Activated CD4-positive, alpha-beta memory T cell treated with anti-CD3 and anti-CD28 coated beads, Interleukin-2, amount 10 ng/mL, durations not matched to agents 7 days and 5 days (primary cell): ENCODE measurements at regions of chr4 and their contacts with region 1.

Region 1: GRCh38 chr4:6909073-6909965 is at the start of gene TBC1D14:
- DNase-seq: peak; percentile 88
- H3K4me3 Mint-ChIP-seq: peak within 1 kb of the TSS; percentile 91
- H3K27ac Mint-ChIP-seq: peak within 1 kb of the TSS; percentile 85
- H3K4me1 Mint-ChIP-seq: peaks cover 64% of the 10 kb centered on the region
- H3K27me3 Mint-ChIP-seq: peaks cover 2% of the 10 kb centered on the region
- total RNA-seq, gene TBC1D14: 53.7 to 55.3 TPM

Region 2: DNA sequence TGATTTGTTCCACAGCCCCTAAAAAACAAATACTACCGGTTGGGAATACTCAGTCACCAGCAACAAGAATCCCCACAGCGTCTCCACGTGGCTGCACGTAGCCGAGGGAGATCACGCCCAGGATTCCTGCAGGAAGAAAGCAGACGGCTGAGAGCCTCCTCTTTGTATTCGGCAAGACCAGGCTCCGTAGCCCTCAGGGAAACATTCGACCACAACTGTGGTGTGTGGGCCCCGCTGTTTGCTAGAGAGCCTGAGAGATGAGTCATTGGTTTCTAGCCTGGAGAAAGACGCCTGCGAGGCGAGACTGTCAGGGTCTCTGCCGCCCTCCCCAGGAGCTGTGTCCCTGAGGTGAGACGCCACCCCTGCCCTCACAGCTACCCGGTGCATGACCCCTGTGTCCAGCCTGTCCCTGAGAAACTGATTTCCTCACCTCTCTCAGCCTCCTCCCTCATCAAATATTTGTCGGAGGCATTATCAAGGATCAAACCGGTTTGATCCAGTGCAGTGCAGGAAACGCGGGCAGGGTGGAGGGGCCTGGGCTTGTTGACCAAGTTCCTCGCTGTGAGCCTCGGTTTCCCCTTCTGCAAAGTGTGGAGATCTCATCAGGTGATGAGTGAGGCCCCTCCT is 220.3 kb before region 1 on chr4:
- CTCF ChIA-PET with region 1: no interaction called
- POLR2A ChIA-PET with region 1: interaction called, 11 read pairs
- DNase-seq: peak; percentile 91
- H3K4me3 Mint-ChIP-seq: peak overlapping the region; percentile 81
- H3K27ac Mint-ChIP-seq: peak overlapping the region; percentile 97
- H3K4me1 Mint-ChIP-seq: peaks cover 87% of the 10 kb centered on the region
- H3K27me3 Mint-ChIP-seq: no peaks in the 10 kb centered on the region

Region 3: DNA sequence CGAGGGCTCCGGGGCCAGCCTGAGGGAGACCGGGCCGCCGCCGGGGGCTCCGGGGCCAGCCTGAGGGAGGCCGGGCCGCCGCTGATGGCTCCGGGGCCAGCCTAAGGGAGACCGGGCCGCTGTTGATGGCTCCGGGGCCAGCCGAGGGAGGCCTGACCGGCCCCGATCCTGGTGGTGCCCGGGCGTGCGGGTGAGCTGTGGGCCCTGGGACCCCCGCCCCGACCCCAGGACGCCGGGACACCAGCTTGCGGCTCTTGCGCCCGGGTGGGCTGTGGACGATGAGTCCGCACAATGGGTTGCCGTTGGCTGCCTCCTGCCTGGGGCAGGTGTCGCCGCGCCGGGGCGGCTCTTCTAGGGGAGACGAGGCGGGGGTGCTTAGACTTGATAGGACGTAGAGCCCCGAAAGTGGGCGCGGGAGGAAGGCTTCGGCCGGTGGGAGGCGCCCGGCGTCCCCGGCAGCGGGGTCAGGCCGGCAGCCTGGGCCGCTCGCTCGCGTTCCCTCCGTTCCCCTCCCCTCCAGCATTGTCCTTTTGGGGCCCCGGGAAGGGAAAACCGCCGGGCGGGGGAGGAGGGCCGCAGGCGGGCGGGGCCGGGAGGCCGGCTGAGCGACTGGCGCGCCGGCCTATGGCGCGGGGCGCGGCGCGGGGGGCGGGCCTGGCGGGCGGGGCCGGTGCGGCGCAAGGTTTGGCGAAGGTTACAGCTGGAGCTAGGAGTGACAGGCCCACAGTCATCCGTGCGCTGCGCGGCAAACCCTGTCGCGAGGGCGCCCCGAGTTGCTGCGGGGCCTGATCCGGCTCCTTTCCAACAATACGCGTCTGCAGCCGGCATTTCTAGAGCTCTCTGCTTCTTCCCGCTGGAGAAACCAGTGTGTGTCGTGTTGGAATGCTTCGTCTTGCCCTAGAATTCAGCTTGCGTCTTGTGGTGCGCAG is 126.0 kb before region 1 on chr4:
- CTCF ChIA-PET with region 1: no interaction called
- POLR2A ChIA-PET with region 1: interaction called, 15 read pairs
- DNase-seq: peak; percentile 92
- H3K4me3 Mint-ChIP-seq: peak overlapping the region; percentile 79
- H3K27ac Mint-ChIP-seq: peak overlapping the region; percentile 79
- H3K4me1 Mint-ChIP-seq: peaks cover 60% of the 10 kb centered on the region
- H3K27me3 Mint-ChIP-seq: peaks cover 2% of the 10 kb centered on the region

Region 4: GRCh38 chr4:6898763-6899162 is 10.6 kb before region 1 on chr4:
- CTCF ChIA-PET with region 1: interaction called, 26 read pairs
- POLR2A ChIA-PET with region 1: interaction called, 109 read pairs
- DNase-seq: peak; percentile 39
- H3K4me3 Mint-ChIP-seq: peak overlapping the region; percentile 40
- H3K27ac Mint-ChIP-seq: peak overlapping the region; percentile 94
- H3K4me1 Mint-ChIP-seq: peaks cover 63% of the 10 kb centered on the region
- H3K27me3 Mint-ChIP-seq: no peaks in the 10 kb centered on the region

Region 5: DNA sequence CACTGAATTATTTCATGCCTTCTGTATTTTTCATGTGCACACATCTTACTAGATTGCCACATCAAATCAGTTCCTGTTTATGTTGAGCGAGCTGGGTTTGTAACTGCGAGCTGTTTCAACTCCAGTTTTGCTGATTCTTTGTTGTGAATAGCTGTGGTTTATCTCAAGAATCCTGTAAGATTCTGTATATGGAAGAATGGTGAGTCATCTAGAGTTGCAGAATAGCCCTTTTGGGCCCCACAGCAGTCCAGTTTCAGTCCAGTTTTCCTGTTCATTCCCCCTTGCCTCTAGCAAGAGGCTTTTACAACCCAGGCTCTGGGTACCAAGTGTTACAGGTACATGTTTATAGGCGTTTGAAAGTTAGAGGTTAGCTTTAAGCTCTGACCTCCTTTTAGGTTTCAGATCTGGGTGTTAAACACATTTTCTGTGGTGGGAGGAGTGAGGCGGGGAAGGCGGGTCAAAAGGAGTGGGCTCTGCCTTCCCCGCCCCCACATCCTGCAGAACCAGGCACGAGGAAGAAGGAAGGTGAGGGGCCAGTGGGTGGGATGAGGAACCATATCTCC is 33.0 kb after region 1 on chr4:
- CTCF ChIA-PET with region 1: interaction called, 3 read pairs
- POLR2A ChIA-PET with region 1: interaction called, 16 read pairs
- DNase-seq: peak; percentile 61
- H3K4me3 Mint-ChIP-seq: peak overlapping the region; percentile 19
- H3K27ac Mint-ChIP-seq: peak overlapping the region; percentile 87
- H3K4me1 Mint-ChIP-seq: peaks cover 56% of the 10 kb centered on the region
- H3K27me3 Mint-ChIP-seq: no peaks in the 10 kb centered on the region

Region 6: DNA sequence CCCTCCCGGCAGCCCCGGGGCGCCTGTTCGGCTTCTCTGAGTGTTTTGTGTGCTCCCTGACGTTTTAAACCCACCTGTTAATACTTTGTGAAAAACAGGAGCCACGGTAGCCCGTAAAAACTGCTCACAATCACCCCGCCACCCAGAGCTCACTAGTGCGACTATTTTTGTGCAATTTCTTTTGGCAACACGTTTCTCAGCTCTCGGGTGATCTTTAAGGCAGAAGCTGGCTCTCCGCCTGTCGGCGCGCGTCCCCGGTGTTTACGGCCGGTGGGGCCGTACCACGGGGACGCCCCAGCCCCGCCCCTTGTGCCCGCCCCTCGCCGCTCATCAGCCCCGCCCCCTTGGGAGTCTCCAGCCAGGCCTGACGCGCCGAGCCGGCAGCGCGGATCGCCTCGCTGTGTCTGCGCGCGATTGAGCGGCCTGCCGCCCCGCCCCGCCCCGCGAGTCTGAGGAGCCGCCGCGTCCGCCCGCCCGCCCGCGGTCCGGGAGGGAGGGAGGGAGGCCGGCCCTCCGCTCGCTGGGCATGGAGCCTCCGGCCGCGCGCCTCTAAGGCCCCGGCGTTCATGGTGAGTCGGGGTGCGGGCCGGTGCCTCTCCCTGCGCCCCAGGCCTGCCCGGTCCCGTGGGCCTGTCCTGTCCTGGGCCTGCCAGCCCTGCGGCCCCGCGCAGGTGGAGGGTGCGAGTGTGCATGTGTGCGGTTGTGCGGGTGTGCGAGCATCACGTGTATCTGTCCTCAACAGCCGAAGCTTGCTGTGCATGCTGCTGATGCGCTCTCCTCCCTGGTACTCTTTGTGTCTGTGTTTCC is 77.7 kb after region 1 on chr4:
- CTCF ChIA-PET with region 1: interaction called, 4 read pairs
- POLR2A ChIA-PET with region 1: interaction called, 34 read pairs
- DNase-seq: peak; percentile 95
- H3K4me3 Mint-ChIP-seq: peak overlapping the region; percentile 98
- H3K27ac Mint-ChIP-seq: peak overlapping the region; percentile 95
- H3K4me1 Mint-ChIP-seq: peaks cover 81% of the 10 kb centered on the region
- H3K27me3 Mint-ChIP-seq: no peaks in the 10 kb centered on the region

Region 7: DNA sequence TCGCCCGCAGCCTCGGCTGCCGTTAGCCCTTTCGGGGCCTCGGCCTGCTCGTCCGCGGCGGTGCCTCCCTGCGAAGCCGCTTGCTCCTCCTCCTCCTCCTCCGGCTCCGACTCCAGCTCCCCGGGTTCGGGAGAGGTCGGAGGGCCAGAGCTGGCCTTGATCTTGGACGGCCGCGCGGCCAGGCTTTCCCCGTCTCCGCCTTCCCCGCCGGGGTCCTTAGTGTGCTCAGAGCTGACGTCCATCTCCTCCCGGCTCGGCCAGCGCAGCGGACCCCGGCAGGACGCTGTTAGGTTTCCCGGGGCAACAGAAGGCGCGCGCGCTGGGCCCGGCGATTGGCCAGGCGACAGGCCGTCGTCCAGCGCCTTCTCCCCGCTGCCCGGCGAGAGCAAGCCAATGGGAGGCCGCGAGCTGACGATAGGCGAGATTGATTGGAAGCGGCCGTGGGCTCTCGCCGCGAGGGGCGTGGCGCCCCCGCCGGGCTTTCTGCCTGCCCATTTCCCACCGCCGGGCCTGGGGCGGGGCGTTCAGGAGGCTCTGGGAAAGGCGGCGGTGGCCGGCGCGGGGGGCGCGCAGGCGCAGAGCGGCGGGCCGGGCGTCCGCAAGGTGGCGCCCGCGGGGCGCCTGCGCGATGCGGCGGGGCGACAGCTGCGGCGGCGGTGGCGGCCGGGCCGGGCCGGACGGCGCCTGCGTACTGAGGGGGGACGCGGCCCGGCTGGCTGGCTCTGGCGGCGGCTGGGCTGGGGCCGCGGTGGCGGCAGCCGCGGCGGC is 133.6 kb after region 1 on chr4 and contains the start of gene TADA2B:
- CTCF ChIA-PET with region 1: interaction called, 5 read pairs
- POLR2A ChIA-PET with region 1: interaction called, 20 read pairs
- DNase-seq: peak; percentile 96
- H3K4me3 Mint-ChIP-seq: peak within 1 kb of the TSS; percentile 94
- H3K27ac Mint-ChIP-seq: peak within 1 kb of the TSS; percentile 78
- H3K4me1 Mint-ChIP-seq: peaks cover 50% of the 10 kb centered on the region
- H3K27me3 Mint-ChIP-seq: peaks cover 10% of the 10 kb centered on the region
- total RNA-seq, gene TADA2B: 26.6 to 27.3 TPM